Dorsolateral prefrontal cortex (tissue), 120 donors: ENCODE measurements at regions of chr1 and their contacts with region 1.

Region 1: DNA sequence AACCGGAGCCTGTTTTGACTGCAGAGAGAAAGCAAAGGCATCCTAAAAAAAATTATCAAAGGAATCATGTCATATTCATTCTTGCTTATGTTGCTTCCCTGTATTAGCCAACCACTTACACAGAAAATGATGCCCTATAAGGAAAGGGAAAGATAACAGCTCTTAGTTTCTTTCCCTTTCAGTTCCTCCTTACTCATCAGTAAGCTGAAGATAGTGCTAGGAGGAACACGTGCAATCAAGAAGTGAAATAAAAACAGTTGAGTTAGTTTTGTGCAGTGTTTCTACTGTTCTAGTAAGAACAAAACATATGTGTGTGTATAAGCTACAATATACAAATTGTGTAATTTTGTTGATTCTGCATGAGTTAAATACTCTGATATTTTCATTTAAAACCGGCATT is 45.3 kb upstream of the MTF2 start:
- DNase-seq: no peak
- H3K4me3 ChIP-seq: no peak overlapping the region
- H3K27ac ChIP-seq: no peak overlapping the region
- H3K27me3 ChIP-seq: no peaks in the 10 kb centered on the region
- CTCF ChIP-seq: no peak

Region 2: DNA sequence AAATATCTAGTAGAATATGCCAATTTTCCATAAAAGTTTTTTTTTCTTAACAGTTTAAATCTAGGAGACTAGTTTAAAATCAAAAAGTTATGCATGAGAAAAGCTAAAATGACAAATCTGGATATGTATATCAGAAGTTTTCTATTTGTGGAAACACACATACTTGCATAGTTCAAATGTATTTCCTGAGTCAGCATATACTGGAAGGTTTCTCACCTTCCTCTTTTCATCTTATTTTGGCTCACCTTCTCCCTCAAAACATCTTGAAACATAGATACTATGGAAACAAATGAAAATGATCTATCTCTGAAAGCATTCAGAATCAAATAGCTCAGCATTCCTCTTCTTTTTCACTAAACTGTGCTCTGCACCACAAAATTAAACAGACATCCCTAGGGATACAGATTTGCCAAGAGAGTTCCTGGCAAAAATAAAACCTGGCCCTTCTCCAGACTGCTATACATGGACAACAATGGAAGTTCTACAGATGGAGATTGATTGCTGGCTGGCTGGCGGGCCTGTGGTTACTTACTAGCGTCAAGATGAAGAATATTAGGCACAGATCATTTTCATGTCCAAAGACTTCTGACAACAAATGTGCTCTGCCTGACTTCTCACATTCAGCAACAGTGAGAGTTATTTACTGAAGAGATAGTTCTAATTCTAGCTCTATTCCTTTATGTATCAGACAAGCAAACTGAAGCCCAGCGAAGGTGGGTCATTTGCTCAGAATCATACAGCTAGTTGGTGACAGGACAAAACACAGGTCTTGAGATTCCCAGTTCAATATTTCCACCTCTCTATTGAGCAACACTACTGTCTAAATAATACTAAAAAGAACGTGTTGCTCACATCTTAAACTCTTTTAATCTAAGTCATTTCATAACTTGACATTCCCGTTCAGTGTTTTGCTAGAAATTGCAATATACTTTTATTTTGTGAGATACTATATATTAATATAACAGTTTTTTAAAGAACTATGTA is 99.1 kb before region 1 on chr1:
- intact Hi-C with region 1: no loop called
- DNase-seq: peak in 4 of 10 donors; percentile 56 to 75 (median 64)
- H3K4me3 ChIP-seq: peak overlapping the region in 21 of 59 donors; percentile 3 to 37 (median 17)
- H3K27ac ChIP-seq: peak overlapping the region in 57 of 59 donors; percentile 1 to 82 (median 62)
- H3K27me3 ChIP-seq: no peaks in the 10 kb centered on the region
- CTCF ChIP-seq: peak in 1 of 56 donors; percentile 8

Region 3: DNA sequence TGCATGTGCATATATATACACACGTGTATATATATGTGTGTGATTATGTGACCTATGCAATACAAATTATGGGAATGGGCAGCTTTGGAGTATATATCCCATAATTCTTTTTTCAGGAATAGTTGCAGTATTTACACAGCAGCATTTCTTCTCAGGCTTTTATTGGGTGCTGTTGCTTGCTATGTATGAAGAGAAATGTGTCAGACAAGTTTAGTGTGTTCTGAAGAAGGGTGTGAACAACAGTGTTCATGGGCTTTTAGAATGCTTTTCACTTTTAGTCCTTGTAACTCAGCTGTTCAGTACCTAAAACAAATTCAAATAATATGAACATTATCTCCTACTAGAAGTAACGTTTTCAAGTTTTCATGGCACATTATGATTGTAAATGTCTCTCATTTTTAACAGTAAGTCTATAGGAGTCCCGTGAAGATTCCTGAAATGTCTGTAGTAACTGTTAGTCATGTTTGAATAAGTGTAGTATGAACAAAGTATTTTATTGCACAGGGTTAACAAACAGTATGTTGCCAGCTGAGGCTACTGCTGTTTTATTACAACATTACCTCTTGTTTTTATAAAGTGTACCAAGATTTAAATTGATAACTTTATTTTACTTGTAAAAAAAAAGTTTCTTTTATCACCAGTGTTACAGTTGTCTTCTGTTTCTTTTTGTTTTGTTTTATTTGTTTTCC is 104.0 kb after region 1 on chr1:
- intact Hi-C with region 1: loop called in 1 of 2 experiments (anchors 5 kb)
- DNase-seq: no peak
- H3K4me3 ChIP-seq: no peak overlapping the region
- H3K27ac ChIP-seq: no peak overlapping the region
- H3K27me3 ChIP-seq: no peaks in the 10 kb centered on the region
- CTCF ChIP-seq: no peak

Region 4: GRCh38 chr1:93207211-93207610 is 173.4 kb after region 1 on chr1:
- intact Hi-C with region 1: no loop called
- DNase-seq: no peak
- H3K4me3 ChIP-seq: no peak overlapping the region
- H3K27ac ChIP-seq: no peak overlapping the region
- H3K27me3 ChIP-seq: no peaks in the 10 kb centered on the region
- CTCF ChIP-seq: no peak